Posterior vena cava (tissue), 2 donors: ENCODE measurements at regions of chr3 and their contacts with region 1.

Region 1: GRCh38 chr3:39086144-39086543 is 21.3 kb downstream of the GORASP1 start:
- DNase-seq: no peak

Region 2: GRCh38 chr3:37559461-37559860 is 1526.7 kb before region 1 on chr3:
- intact Hi-C with region 1: no loop called
- DNase-seq: no peak

Region 3: DNA sequence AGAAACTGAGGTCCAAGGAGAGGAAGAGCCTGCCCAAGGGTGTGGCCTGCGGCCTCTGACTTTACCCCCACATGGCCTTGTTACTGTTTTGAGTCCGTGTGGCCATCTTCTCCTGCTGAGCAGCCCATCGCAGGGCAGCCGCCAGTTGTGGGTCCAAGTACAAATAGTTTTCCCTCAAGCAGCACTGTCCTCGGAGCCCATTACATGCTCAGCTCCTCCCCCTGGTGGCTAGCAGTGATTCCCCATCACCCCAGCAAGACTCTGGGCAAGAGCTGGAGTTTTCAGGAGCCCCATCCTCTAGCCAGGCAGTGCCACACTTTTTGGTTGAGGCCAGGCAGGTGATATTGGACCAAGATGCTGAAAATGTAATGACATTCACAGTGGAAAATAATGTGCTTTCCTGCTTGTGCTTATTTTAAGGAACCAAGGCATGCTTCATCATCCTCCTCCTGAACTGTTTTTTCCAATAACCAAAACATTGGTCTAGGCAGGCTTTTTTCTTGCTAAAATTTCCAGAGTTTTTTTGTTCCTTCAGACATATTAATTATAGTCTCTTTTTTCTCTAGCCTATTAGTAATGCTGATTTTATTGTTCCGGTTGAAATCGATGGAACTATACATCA is 1118.8 kb before region 1 on chr3:
- intact Hi-C with region 1: loop called in 1 of 2 experiments (anchors 5 kb)
- DNase-seq: peak; percentile 88

Region 4: GRCh38 chr3:39096775-39097174 is 10.6 kb after region 1 on chr3:
- intact Hi-C with region 1: loop called in 1 of 2 experiments (anchors 1 kb)
- DNase-seq: no peak